B cell (primary cell): ENCODE measurements at regions of chr19 and their contacts with region 1.

Region 1: DNA sequence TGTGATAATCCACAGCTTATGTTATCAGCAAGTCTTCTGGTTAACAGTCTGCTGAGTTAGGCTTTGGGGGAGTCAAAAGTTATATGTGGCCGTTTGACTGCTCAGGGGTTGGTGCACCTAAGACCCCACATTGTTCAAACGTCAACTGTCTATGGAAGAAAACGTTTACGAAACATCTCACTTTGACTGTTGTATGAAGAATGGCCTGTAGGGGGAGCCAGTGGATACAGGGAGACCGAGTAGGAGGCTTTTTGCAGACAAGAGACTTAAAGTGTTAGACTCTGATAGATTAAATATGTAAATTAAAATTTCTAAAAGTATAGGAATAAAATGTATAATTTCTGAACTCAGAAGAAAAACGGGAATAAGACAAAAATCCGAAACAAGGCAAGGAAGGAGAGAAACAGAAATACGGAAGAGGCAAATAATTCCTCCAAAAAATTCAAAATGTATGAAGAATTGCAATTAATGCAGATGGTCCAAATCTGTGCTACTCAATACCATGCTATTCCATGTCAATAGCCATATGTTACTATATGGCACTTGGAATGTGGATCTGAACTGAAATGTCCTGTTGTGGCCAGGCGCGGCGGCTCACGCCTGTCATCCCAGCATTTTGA is 37.8 kb downstream of the TNFSF14 start:
- DNase-seq: peak; percentile 87
- ATAC-seq: peak; percentile 78
- H3K4me3 ChIP-seq: no peak overlapping the region
- H3K4me3 Mint-ChIP-seq: no peak overlapping the region
- H3K27ac ChIP-seq: no peak overlapping the region
- H3K27ac Mint-ChIP-seq: no peak overlapping the region
- H3K4me1 ChIP-seq: peaks cover 5 to 8% of the 10 kb centered on the region in 2 donors
- H3K4me1 Mint-ChIP-seq: peaks cover 26% of the 10 kb centered on the region
- H3K27me3 ChIP-seq: no peaks in the 10 kb centered on the region
- H3K27me3 Mint-ChIP-seq: peaks cover 3% of the 10 kb centered on the region
- CTCF ChIP-seq: peak; percentile 92

Region 2: DNA sequence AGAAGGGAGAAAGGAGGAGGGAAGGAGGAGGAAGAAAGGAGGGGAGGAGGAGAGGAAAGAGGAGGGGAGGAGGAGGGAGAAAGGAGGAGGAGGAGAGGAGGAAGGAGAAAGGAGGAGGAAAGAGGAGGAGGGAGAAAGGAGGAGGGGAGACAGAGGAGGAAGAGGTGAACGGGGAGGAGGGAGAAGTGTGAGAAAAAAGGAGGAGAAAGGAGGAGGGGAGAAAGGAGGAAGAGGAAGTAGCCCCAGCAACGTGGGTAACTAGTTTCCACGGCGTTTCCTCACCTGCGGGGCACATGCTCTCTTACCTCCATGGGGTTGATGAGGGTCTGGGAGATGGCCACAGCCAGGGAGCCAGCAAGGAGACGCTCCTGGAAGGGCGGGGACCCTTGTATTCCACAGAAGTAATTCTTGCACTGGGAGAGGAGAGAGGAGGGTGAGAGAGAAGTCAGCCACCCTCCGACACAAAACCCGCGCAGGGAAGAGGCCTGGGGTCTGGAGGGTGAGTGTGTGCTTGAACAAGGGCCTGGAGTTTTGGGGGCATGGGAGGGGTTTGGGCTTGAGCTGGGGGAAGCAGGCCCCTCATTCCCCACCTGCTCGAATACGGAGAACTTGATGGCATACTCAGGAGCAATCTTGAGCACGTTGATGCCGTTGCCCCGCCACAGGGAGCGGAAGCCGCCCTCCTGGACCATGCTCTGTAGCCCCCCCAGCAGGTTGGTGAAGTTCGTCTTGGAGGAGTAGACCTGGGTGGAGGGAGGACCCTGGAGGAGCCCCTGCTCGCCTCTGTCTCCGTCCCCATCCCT is 202.5 kb before region 1 on chr19:
- CTCF ChIA-PET with region 1: no interaction called
- POLR2A ChIA-PET with region 1: no interaction called
- intact Hi-C with region 1: no loop called
- DNase-seq: peak; percentile 21
- ATAC-seq: no peak
- H3K4me3 ChIP-seq: no peak overlapping the region
- H3K4me3 Mint-ChIP-seq: no peak overlapping the region
- H3K27ac ChIP-seq: no peak overlapping the region
- H3K27ac Mint-ChIP-seq: no peak overlapping the region
- H3K4me1 ChIP-seq: peaks cover 7 to 17% of the 10 kb centered on the region in 2 donors
- H3K4me1 Mint-ChIP-seq: peaks cover 9% of the 10 kb centered on the region
- H3K27me3 ChIP-seq: no peaks in the 10 kb centered on the region
- H3K27me3 Mint-ChIP-seq: no peaks in the 10 kb centered on the region
- CTCF ChIP-seq: no peak

Region 3: DNA sequence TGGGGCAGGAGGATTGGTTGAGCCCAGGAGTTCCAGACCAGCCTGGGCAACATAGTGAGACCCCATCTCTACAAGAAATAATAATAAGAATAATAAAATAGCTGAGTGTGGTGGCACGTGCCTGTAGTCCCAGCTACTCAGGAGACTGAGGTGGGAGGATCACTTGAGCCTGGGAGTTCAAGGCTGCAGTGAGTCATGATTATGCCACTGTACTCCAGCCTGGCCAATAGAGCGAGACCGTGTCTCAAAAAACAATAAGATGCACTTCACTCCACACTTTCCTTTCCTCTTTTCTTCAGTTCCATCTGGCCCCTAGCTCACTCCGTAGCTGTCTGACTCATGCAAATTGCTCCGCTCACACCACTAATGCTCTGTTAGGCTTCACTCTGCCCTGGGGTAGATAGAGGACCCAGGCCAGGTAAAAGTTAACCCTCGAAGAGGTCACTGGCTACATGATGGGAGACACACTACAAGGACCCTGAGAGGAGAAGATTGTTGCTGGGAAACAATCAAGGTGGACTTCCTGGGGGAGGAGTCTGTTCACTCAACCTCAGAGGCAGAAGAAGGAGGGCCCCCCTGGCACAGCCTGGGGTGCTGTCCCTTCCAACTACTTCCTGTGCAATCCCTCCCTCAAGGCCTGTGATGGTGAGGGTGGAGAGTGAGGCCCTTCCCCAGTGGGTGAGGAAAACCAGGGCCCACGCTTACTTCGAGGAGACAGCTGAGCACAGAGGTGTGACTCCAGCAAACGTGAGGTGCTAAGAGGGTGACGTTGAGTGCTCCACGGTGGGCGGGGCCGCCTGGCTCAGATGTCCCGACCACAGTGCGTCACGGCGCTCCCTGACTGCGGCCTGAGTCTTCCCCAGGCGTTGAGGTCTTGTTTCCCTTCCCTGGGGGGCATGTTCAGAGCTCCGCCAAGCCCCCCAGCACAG is 110.1 kb before region 1 on chr19:
- CTCF ChIA-PET with region 1: interaction called, 49 read pairs
- POLR2A ChIA-PET with region 1: interaction called, 13 read pairs
- intact Hi-C with region 1: loop called (anchors 1 kb)
- DNase-seq: peak; percentile 91
- ATAC-seq: peak; percentile 72
- H3K4me3 ChIP-seq: peak overlapping the region in 3 of 5 experiments; percentile 15 to 34 (median 32)
- H3K4me3 Mint-ChIP-seq: peak overlapping the region; percentile 80
- H3K27ac ChIP-seq: peak overlapping the region; percentile 70 to 92
- H3K27ac Mint-ChIP-seq: peak overlapping the region; percentile 97
- H3K4me1 ChIP-seq: peaks cover 27 to 53% of the 10 kb centered on the region in 2 donors
- H3K4me1 Mint-ChIP-seq: peaks cover 39% of the 10 kb centered on the region
- H3K27me3 ChIP-seq: no peaks in the 10 kb centered on the region
- H3K27me3 Mint-ChIP-seq: no peaks in the 10 kb centered on the region
- CTCF ChIP-seq: no peak

Region 4: GRCh38 chr19:6564393-6564792 is 67.7 kb before region 1 on chr19:
- CTCF ChIA-PET with region 1: interaction called, 4 read pairs
- POLR2A ChIA-PET with region 1: no interaction called
- intact Hi-C with region 1: loop called (anchors 2 kb)
- DNase-seq: peak; percentile 42
- ATAC-seq: peak; percentile 14
- H3K4me3 ChIP-seq: no peak overlapping the region
- H3K4me3 Mint-ChIP-seq: no peak overlapping the region
- H3K27ac ChIP-seq: no peak overlapping the region
- H3K27ac Mint-ChIP-seq: no peak overlapping the region
- H3K4me1 ChIP-seq: no peaks in the 10 kb centered on the region
- H3K4me1 Mint-ChIP-seq: no peaks in the 10 kb centered on the region
- H3K27me3 ChIP-seq: peaks cover 0 to 8% (median 0%) of the 10 kb centered on the region in 4 experiments
- H3K27me3 Mint-ChIP-seq: peaks cover 18% of the 10 kb centered on the region
- CTCF ChIP-seq: no peak

Region 5: GRCh38 chr19:6674868-6675305 is 42.8 kb after region 1 on chr19:
- CTCF ChIA-PET with region 1: no interaction called
- POLR2A ChIA-PET with region 1: no interaction called
- intact Hi-C with region 1: no loop called
- DNase-seq: peak; percentile 40
- ATAC-seq: peak; percentile 69
- H3K4me3 ChIP-seq: no peak overlapping the region
- H3K4me3 Mint-ChIP-seq: peak overlapping the region; percentile 10
- H3K27ac ChIP-seq: no peak overlapping the region
- H3K27ac Mint-ChIP-seq: peak overlapping the region; percentile 41
- H3K4me1 ChIP-seq: peaks cover 13 to 21% of the 10 kb centered on the region in 2 donors
- H3K4me1 Mint-ChIP-seq: peaks cover 22% of the 10 kb centered on the region
- H3K27me3 ChIP-seq: peaks cover 0 to 23% (median 7%) of the 10 kb centered on the region in 4 experiments
- H3K27me3 Mint-ChIP-seq: peaks cover 45% of the 10 kb centered on the region
- CTCF ChIP-seq: no peak

Region 6: DNA sequence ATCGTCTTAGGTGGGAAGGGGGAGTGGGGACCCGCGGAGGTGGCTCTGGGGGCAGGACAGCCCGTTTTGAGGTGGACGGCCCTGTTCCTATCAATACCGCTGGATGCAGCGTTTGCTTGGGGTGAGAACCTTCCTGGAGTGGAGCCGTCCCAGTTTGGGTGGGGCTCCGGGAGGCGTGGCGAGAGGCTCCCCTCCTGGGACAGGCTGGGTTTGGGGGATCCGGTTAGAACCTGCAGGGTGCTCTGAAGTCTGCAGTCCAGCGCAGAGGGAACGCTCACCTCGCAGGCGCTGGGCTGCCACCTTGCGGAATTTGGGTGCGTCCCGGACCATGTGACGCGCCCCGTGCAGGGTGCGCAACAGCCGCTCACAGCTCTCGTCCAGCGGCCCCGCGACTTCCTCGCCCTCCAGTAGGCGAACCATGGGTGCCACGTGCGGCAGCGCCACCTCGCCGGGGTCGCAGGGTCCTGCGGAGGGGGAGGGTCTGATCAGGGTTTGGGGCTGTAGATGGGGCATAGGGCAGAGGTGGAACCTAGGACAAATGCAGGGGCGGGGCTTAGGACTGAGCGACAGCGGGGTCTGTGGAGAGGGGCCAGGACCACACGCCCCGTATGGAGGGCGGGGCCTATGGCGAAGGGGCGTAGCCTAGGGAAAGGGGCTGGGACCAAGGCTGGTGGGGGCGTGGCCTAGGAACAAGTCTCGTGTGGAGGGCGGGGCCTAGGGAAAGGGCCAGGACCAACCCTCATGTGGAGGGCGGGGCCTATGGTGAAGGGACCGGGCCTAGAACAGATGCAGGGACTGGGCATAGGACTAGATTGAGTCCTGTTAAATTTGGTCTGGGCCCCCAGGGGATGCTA is 121.3 kb after region 1 on chr19:
- CTCF ChIA-PET with region 1: interaction called, 5 read pairs
- POLR2A ChIA-PET with region 1: no interaction called
- intact Hi-C with region 1: loop called (anchors 5 kb)
- DNase-seq: peak; percentile 92
- ATAC-seq: peak; percentile 91
- H3K4me3 ChIP-seq: peak overlapping the region in 4 of 5 experiments; percentile 41 to 65 (median 58)
- H3K4me3 Mint-ChIP-seq: peak overlapping the region; percentile 94
- H3K27ac ChIP-seq: peak overlapping the region in 1 of 2 donors; percentile 35
- H3K27ac Mint-ChIP-seq: peak overlapping the region; percentile 96
- H3K4me1 ChIP-seq: peaks cover 14 to 29% of the 10 kb centered on the region in 2 donors
- H3K4me1 Mint-ChIP-seq: peaks cover 26% of the 10 kb centered on the region
- H3K27me3 ChIP-seq: no peaks in the 10 kb centered on the region
- H3K27me3 Mint-ChIP-seq: no peaks in the 10 kb centered on the region
- CTCF ChIP-seq: peak; percentile 68